ENCODE measurements at regions of chr2 and their contacts with region 1.

Region 1: GRCh38 chr2:219160186-219161017 is at the start of gene NHEJ1:
- DNase-seq: peak; percentile 89
- ATAC-seq: peak; percentile 94
- H3K4me3 ChIP-seq: peak within 1 kb of the TSS; percentile 82
- H3K27ac ChIP-seq: peak within 1 kb of the TSS; percentile 99
- H3K4me1 ChIP-seq: peaks cover 2% of the 10 kb centered on the region; the same call in 1 of the 2 replicates
- H3K27me3 ChIP-seq: no peaks in the 10 kb centered on the region
- CTCF ChIP-seq: peak; percentile 95
- POLR2A ChIP-seq: peak; percentile 44
- RAD21 ChIP-seq: peak; percentile 84
- total RNA-seq, gene NHEJ1: 15.3 and 23.1 TPM in 2 replicates

Region 2: GRCh38 chr2:219218732-219219701 is 58.6 kb after region 1 on chr2 and contains the start of gene ABCB6:
- CTCF ChIA-PET with region 1: no interaction called
- POLR2A ChIA-PET with region 1: no interaction called
- dilution Hi-C with region 1: no loop called
- in situ Hi-C with region 1: no loop called
- intact Hi-C with region 1: loop called (anchors 1 kb)
- DNase-seq: peak; percentile 90
- ATAC-seq: peak; percentile 89
- H3K4me3 ChIP-seq: peak within 1 kb of the TSS; percentile 54
- H3K27ac ChIP-seq: peak within 1 kb of the TSS; percentile 92
- H3K4me1 ChIP-seq: peaks cover 5% of the 10 kb centered on the region; the same call in 1 of the 2 replicates
- H3K27me3 ChIP-seq: no peaks in the 10 kb centered on the region
- CTCF ChIP-seq: no peak
- POLR2A ChIP-seq: no peak; the same call in 1 of the 2 replicates
- RAD21 ChIP-seq: no peak
- total RNA-seq, gene ABCB6: 10.8 and 12.5 TPM in 2 replicates

Region 3: GRCh38 chr2:219352448-219353023 is 192.1 kb after region 1 on chr2:
- CTCF ChIA-PET with region 1: interaction called, 4 read pairs
- POLR2A ChIA-PET with region 1: no interaction called
- dilution Hi-C with region 1: no loop called
- in situ Hi-C with region 1: no loop called
- intact Hi-C with region 1: loop called (anchors 1 kb)
- DNase-seq: peak; percentile 53
- ATAC-seq: peak; percentile 91
- H3K4me3 ChIP-seq: no peak overlapping the region
- H3K27ac ChIP-seq: no peak overlapping the region
- H3K4me1 ChIP-seq: no peaks in the 10 kb centered on the region
- H3K27me3 ChIP-seq: peaks cover 32% of the 10 kb centered on the region
- CTCF ChIP-seq: peak; percentile 72
- POLR2A ChIP-seq: no peak
- RAD21 ChIP-seq: peak; percentile 73

Region 4: DNA sequence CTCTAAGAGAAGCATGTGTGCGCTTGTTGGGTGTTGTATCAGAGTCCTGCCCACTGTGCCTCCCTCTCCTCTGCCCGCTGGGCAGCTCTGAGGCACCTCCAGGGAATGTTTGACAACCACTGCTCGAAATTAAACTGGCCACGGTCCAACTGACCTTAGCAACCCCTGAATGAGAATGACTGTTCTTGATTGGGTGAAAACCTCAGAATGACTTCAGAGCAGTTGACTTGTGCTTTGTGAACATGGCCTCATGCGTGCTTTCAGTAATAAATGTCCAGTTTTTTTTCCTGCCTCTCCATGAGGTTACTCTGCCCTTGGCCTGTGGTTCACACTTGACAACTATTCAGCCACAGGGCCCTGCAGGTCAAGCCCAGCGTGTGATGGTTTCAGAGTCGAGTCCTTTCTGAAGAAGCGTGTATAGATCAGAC is 562.0 kb after region 1 on chr2:
- CTCF ChIA-PET with region 1: no interaction called
- POLR2A ChIA-PET with region 1: no interaction called
- dilution Hi-C with region 1: no loop called
- in situ Hi-C with region 1: no loop called
- intact Hi-C with region 1: no loop called
- DNase-seq: no peak
- ATAC-seq: no peak
- H3K4me3 ChIP-seq: no peak overlapping the region
- H3K27ac ChIP-seq: no peak overlapping the region
- H3K4me1 ChIP-seq: no peaks in the 10 kb centered on the region
- H3K27me3 ChIP-seq: no peaks in the 10 kb centered on the region; the same call in 1 of the 2 replicates
- CTCF ChIP-seq: no peak
- POLR2A ChIP-seq: no peak
- RAD21 ChIP-seq: no peak